Adrenal gland (tissue), 19 donors: ENCODE measurements at regions of chr18 and their contacts with region 1.

Region 1: GRCh38 chr18:42298759-42299675 is 344.0 kb downstream of the PIK3C3 start:
- DNase-seq: peak; percentile 67 to 96 (median 85)
- H3K4me3 ChIP-seq: peak overlapping the region in 1 of 4 donors; percentile 35
- H3K27ac ChIP-seq: no peak overlapping the region
- H3K4me1 ChIP-seq: no peaks in the 10 kb centered on the region
- H3K27me3 ChIP-seq: no peaks in the 10 kb centered on the region
- CTCF ChIP-seq: peak; percentile 74 to 91 (median 88)
- POLR2A ChIP-seq: no peak

Region 2: DNA sequence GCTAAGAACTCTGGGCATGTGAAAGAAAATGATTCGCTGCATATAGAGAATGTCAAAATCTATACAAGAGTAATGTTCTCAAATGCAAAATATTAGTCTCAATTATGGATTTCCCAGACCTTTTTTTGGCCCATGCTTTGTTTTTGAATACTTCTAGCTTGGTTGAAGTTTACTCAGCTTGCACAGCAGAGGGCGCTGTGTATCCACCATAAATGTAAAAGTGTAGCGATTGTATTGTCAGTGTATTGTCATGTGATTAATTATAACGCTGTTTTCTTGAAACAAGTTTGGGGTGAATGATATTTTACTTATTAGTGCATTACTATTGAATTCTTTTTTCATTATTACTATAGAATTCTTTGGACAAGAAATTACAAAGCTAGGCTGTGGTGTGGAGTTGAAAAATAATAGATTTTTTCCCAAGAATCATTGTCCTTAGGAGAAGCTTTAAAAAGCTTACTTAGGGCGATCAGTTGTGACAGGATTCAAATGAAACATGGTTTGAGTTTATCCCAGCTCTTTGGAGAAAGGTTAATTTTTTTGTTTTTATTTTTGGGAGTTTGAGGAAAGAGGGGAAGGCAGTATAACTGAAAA is 245.7 kb before region 1 on chr18:
- intact Hi-C with region 1: loop called in 1 of 2 experiments (anchors 10 kb)
- DNase-seq: peak; percentile 43 to 76 (median 64)
- H3K4me3 ChIP-seq: peak overlapping the region in 1 of 4 donors; percentile 40
- H3K27ac ChIP-seq: no peak overlapping the region
- H3K4me1 ChIP-seq: peaks cover 0 to 12% of the 10 kb centered on the region in 2 donors
- H3K27me3 ChIP-seq: no peaks in the 10 kb centered on the region
- CTCF ChIP-seq: peak; percentile 60 to 89 (median 76)
- POLR2A ChIP-seq: no peak

Region 3: GRCh38 chr18:42114310-42114943 is 184.6 kb before region 1 on chr18:
- intact Hi-C with region 1: loop called in 1 of 2 experiments (anchors 5 kb)
- DNase-seq: peak; percentile 51 to 87 (median 68)
- H3K4me3 ChIP-seq: no peak overlapping the region
- H3K27ac ChIP-seq: no peak overlapping the region
- H3K4me1 ChIP-seq: peaks cover 5 to 12% of the 10 kb centered on the region in 2 donors
- H3K27me3 ChIP-seq: no peaks in the 10 kb centered on the region
- CTCF ChIP-seq: peak; percentile 75 to 97 (median 88)
- POLR2A ChIP-seq: no peak

Region 4: DNA sequence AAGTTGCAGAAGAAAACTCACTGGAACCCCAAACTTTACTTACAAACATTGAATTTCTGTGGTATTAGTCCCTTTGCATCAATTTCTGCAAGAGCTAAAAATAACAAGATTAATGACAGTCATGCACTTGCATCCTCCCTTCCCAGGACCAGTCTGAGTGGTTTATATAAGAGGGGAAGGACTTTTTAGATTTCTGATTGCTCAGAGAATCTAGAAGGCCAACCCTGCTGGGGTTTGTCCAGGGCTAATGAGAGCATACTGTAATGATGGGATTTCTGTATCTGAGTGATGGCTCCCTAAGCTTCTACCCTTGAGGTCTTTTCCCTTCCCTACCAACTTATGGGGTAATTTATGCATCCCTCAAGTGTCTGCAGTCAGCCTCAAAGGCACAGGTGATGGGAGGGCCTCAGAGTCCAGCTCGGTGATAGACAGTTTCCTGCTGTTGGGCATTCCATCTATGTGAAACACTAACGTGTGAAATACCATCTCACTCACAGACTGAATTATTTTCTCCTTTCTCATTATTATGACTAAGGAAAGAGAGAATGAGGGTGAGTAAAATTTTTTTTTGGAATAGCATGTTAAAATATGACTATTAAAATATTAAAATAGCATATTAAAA is 260.2 kb after region 1 on chr18:
- intact Hi-C with region 1: no loop called
- DNase-seq: no peak
- H3K4me3 ChIP-seq: no peak overlapping the region
- H3K27ac ChIP-seq: no peak overlapping the region
- H3K4me1 ChIP-seq: no peaks in the 10 kb centered on the region
- H3K27me3 ChIP-seq: no peaks in the 10 kb centered on the region
- CTCF ChIP-seq: no peak
- POLR2A ChIP-seq: no peak

Region 5: GRCh38 chr18:43271593-43272432 is 972.8 kb after region 1 on chr18:
- intact Hi-C with region 1: loop called in 1 of 2 experiments (anchors 5 kb)
- DNase-seq: peak in 5 of 7 donors; percentile 18 to 33 (median 24)
- H3K4me3 ChIP-seq: no peak overlapping the region
- H3K27ac ChIP-seq: no peak overlapping the region
- H3K4me1 ChIP-seq: no peaks in the 10 kb centered on the region
- H3K27me3 ChIP-seq: no peaks in the 10 kb centered on the region
- CTCF ChIP-seq: peak; percentile 56 to 85 (median 71)
- POLR2A ChIP-seq: no peak